Psoas muscle (tissue), 8 donors: ENCODE measurements at regions of chr16 and their contacts with region 1.

Region 1: GRCh38 chr16:80526425-80527061 is 14.2 kb upstream of the DYNLRB2 start:
- DNase-seq: peak in 1 of 2 donors; percentile 30
- ATAC-seq: peak in 2 of 4 donors; percentile 63 to 72
- H3K4me3 ChIP-seq: no peak overlapping the region
- H3K27ac ChIP-seq: no peak overlapping the region
- H3K4me1 ChIP-seq: no peaks in the 10 kb centered on the region
- H3K27me3 ChIP-seq: peaks cover 0 to 4% (median 0%) of the 10 kb centered on the region in 3 donors
- CTCF ChIP-seq: peak; percentile 90

Region 2: DNA sequence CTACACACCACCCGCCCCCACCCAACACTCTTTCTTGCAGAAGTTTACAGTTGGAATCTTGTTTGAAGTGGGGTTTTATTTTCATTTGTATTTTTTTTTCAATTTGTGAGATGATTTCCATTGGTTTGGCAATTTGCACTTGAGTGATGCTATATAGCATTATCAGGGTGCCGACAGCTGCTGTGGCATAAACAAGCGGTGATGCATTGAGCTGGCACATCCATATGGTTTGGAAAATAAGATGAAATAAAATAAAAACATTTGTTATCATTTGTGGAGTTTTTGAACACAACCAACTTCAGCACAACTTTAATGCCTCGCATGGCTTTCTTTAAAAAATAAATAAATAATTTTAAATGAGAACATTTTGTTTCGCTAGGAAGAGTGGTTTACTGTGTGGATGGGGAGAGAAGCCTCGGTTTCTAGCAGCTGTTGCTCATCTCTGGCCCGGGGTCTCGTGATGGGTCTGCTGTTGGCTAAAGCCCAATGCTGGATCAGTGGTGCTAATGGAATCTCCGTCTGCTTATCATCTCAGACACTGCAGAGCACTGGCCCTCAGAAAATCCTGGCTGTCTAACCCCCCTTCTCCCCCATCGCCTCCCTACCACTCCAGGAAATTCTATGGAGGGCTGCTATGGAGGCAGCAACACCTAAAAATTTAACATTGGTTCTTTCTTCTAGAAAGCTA is 733.7 kb before region 1 on chr16:
- intact Hi-C with region 1: loop called in 1 of 2 experiments (anchors 5 kb)
- DNase-seq: no peak
- ATAC-seq: no peak
- H3K4me3 ChIP-seq: no peak overlapping the region
- H3K27ac ChIP-seq: no peak overlapping the region
- H3K4me1 ChIP-seq: no peaks in the 10 kb centered on the region
- H3K27me3 ChIP-seq: no peaks in the 10 kb centered on the region
- CTCF ChIP-seq: no peak